Activated CD4-positive, alpha-beta T cell treated with anti-CD3 and anti-CD28 coated beads, Interleukin-2, amount 10 ng/mL, durations not matched to agents 7 days and 5 days (primary cell): ENCODE measurements at regions of chr1 and their contacts with region 1.

Region 1: DNA sequence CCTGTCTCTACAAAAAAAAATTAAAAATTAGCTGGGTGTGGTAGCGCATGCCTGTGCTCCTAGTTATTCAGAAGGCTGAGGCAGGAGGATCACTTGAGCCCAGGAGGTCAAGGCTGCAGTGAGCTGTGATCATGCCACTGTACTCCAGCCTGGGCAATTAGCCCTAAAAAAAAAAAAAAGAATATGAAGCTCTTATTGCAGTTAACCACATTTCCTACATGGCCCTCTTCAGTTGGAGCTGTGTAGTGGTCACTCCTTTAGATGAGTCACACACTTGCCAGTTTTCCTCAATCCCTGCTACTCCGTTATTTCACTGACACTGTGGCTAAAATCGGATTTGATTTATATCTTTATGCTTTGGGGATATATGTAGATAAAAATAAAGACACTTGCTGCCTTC is 11.8 kb downstream of the NFYC start:
- DNase-seq: no peak
- H3K4me3 Mint-ChIP-seq: no peak overlapping the region
- H3K27ac Mint-ChIP-seq: peak overlapping the region; percentile 13
- H3K4me1 Mint-ChIP-seq: peaks cover 47% of the 10 kb centered on the region
- H3K27me3 Mint-ChIP-seq: no peaks in the 10 kb centered on the region

Region 2: GRCh38 chr1:40691538-40692428 is 11.5 kb before region 1 on chr1 and contains the start of gene NFYC:
- CTCF ChIA-PET with region 1: interaction called, 40 read pairs
- POLR2A ChIA-PET with region 1: interaction called, 6 read pairs
- DNase-seq: peak; percentile 98
- H3K4me3 Mint-ChIP-seq: peak within 1 kb of the TSS; percentile 97
- H3K27ac Mint-ChIP-seq: peak within 1 kb of the TSS; percentile 98
- H3K4me1 Mint-ChIP-seq: peaks cover 60% of the 10 kb centered on the region
- H3K27me3 Mint-ChIP-seq: no peaks in the 10 kb centered on the region
- total RNA-seq, gene NFYC: 85.7 to 99.2 TPM